BJ (cell line): ENCODE measurements at regions of chr11 and their contacts with region 1.

Region 1: GRCh38 chr11:36672813-36673450 is 74.9 kb upstream of the RAG2 start:
- DNase-seq: no peak
- H3K4me3 ChIP-seq: no peak overlapping the region
- H3K27me3 ChIP-seq: no peaks in the 10 kb centered on the region
- CTCF ChIP-seq: peak; percentile 64

Region 2: GRCh38 chr11:36657610-36658267 is 15.2 kb before region 1 on chr11:
- CTCF ChIA-PET with region 1: interaction called, 13 read pairs
- POLR2A ChIA-PET with region 1: no interaction called
- DNase-seq: no peak
- H3K4me3 ChIP-seq: no peak overlapping the region
- H3K27me3 ChIP-seq: no peaks in the 10 kb centered on the region
- CTCF ChIP-seq: no peak